ENCODE measurements at regions of chr9 and their contacts with region 1.

Region 1: GRCh38 chr9:28899926-28900325 is 1326.6 kb upstream of the C9orf72 start:
- DNase-seq: no peak
- ATAC-seq: no peak
- H3K4me3 ChIP-seq: no peak overlapping the region
- H3K27ac ChIP-seq: no peak overlapping the region
- H3K4me1 ChIP-seq: no peaks in the 10 kb centered on the region
- H3K27me3 ChIP-seq: no peaks in the 10 kb centered on the region
- CTCF ChIP-seq: no peak

Region 2: GRCh38 chr9:28598408-28598807 is 301.5 kb before region 1 on chr9:
- intact Hi-C with region 1: loop called in 1 of 2 experiments (anchors 10 kb)
- DNase-seq: peak in 1 of 2 donors; percentile 33
- ATAC-seq: no peak
- H3K4me3 ChIP-seq: no peak overlapping the region
- H3K27ac ChIP-seq: no peak overlapping the region
- H3K4me1 ChIP-seq: no peaks in the 10 kb centered on the region
- H3K27me3 ChIP-seq: no peaks in the 10 kb centered on the region
- CTCF ChIP-seq: no peak

Region 3: GRCh38 chr9:28887188-28887884 is 12.6 kb before region 1 on chr9:
- intact Hi-C with region 1: no loop called
- DNase-seq: no peak
- ATAC-seq: no peak
- H3K4me3 ChIP-seq: no peak overlapping the region
- H3K27ac ChIP-seq: no peak overlapping the region
- H3K4me1 ChIP-seq: no peaks in the 10 kb centered on the region
- H3K27me3 ChIP-seq: no peaks in the 10 kb centered on the region
- CTCF ChIP-seq: no peak

Measured in psoas muscle (tissue), 8 donors.